Right cardiac atrium (tissue), 5 donors: ENCODE measurements at regions of chr11 and their contacts with region 1.

Region 1: DNA sequence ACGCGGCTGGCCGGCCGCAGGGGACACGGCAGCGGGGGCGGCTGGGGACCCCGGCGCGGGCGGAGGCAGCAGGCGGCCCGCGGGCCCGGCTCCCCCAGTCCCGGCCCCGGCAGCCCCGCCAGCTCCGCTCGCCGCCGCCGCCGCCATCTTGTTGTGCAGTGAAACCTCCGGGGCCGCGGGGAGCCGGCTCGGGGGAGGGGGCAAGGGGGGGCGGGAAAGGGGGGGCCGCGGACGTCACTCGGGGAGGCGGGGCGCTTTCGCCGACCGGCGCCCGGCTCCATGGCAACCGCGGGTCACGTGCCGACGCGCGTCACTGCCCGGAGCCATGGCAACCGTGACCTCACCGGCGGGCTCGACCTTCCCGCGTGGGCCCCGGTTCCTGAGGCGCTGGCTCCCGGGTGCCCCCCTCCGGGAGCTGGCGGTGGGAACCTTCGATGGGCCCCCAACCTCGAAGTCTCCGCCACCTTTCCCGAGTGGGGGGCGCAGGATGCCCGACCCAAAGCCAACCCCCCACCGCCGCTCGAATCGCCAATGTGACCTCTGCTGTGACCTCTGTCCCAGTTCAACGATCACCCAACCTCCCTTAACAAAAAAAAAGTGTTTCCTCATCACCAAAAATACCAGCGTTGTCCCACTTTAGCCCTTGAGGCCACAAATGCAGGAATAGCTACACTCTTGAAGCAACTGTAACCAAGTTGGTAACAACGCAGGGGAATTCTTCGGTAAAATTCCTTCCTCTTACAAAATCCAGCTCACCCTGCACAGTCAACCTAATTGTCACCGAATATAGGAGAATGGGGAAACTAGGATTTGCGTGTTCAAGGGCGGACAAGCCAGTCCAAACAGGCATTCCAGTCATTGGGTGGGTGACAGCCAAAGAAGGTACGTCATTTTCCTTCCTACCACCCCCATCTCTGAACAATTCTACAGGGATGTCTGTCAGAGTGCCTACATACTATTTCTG is at the start of gene SIK3:
- DNase-seq: peak; percentile 96 to 98 (median 98)
- ATAC-seq: peak; percentile 94
- H3K4me3 ChIP-seq: peak within 1 kb of the TSS; percentile 58
- H3K27ac ChIP-seq: peak within 1 kb of the TSS; percentile 79
- H3K4me1 ChIP-seq: peaks cover 13% of the 10 kb centered on the region
- H3K27me3 ChIP-seq: no peaks in the 10 kb centered on the region
- total RNA-seq, gene SIK3: 34.2 to 46.6 (median 36.9) TPM

Region 2: DNA sequence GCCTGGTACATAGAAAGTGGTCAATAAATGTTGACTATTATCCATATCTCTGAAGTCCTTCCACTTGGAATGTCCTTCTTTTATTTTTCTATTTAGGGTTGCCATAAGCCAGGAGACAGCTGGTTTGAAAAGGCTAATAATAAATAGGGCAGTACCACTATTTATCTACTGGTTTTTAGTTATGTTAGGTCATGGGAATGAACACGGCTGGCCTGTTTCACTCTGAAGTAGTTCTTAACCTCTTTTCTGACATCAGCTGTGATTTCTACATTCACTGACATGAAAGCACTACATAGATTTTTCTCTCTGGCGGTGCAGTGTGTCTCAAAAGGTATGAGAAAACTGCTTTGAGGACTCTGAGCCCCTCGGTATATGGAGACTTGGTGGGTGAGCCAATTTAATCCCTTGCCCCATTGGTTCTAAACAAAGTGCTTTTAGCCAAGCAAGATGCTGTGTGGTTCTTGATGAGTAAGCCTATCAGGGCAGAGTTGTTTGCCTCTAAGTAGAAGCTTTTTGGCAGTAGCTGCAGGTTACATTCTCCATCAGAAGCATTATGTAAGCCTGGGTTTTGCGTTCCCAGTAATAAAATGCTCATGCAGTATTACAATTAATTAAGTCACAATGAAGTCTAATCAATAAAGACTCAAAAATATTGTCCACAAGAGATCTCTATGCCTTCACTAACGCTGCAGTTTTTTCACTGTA is 212.4 kb before region 1 on chr11:
- intact Hi-C with region 1: loop called in 1 of 4 experiments (anchors 5 kb)
- DNase-seq: no peak
- ATAC-seq: peak; percentile 66 to 87
- H3K4me3 ChIP-seq: no peak overlapping the region
- H3K27ac ChIP-seq: no peak overlapping the region
- H3K4me1 ChIP-seq: no peaks in the 10 kb centered on the region
- H3K27me3 ChIP-seq: no peaks in the 10 kb centered on the region

Region 3: DNA sequence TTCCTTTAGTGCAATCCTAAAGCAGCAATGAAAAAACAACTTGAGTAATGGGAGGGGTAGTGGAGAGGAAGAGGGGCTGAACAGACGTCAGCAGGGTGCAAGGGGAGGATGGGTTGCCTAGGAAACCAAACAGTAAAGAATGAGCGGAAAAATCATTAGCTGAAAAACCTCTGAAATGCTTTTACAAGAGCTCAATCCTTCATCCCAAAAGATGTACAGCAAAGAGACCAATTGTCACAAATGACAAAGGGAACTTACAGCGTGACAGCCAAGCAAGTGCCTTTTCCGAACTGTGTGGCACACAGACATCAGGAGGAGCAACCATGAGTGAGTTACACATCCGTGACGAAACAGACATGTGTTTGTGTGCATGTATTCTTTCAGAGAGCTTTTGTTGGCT is 105.0 kb before region 1 on chr11:
- intact Hi-C with region 1: loop called in 1 of 4 experiments (anchors 10 kb)
- DNase-seq: no peak
- ATAC-seq: peak in 1 of 2 donors; percentile 73
- H3K4me3 ChIP-seq: no peak overlapping the region
- H3K27ac ChIP-seq: no peak overlapping the region
- H3K4me1 ChIP-seq: peaks cover 3% of the 10 kb centered on the region
- H3K27me3 ChIP-seq: no peaks in the 10 kb centered on the region

Region 4: GRCh38 chr11:117160826-117161225 is 62.3 kb after region 1 on chr11:
- intact Hi-C with region 1: no loop called
- DNase-seq: no peak
- ATAC-seq: peak in 1 of 2 donors; percentile 75
- H3K4me3 ChIP-seq: no peak overlapping the region
- H3K27ac ChIP-seq: no peak overlapping the region
- H3K4me1 ChIP-seq: peaks cover 2% of the 10 kb centered on the region
- H3K27me3 ChIP-seq: no peaks in the 10 kb centered on the region

Region 5: GRCh38 chr11:117273550-117274289 is 175.2 kb after region 1 on chr11:
- intact Hi-C with region 1: no loop called
- DNase-seq: no peak
- ATAC-seq: no peak
- H3K4me3 ChIP-seq: no peak overlapping the region
- H3K27ac ChIP-seq: no peak overlapping the region
- H3K4me1 ChIP-seq: no peaks in the 10 kb centered on the region
- H3K27me3 ChIP-seq: no peaks in the 10 kb centered on the region